ENCODE measurements at regions of chr1 and their contacts with region 1.

Region 1: GRCh38 chr1:16904560-16905111 is 8.9 kb downstream of the RNU1-2 start:
- DNase-seq: peak; percentile 97
- CTCF ChIP-seq: no peak

Region 2: GRCh38 chr1:16727190-16728111 is 177.2 kb before region 1 on chr1:
- CTCF ChIA-PET with region 1: no interaction called
- POLR2A ChIA-PET with region 1: no interaction called
- DNase-seq: peak; percentile 64
- CTCF ChIP-seq: no peak

Region 3: GRCh38 chr1:16918371-16918770 is 13.7 kb after region 1 on chr1:
- CTCF ChIA-PET with region 1: no interaction called
- POLR2A ChIA-PET with region 1: interaction called, 10 read pairs
- DNase-seq: no peak
- CTCF ChIP-seq: no peak

Region 4: DNA sequence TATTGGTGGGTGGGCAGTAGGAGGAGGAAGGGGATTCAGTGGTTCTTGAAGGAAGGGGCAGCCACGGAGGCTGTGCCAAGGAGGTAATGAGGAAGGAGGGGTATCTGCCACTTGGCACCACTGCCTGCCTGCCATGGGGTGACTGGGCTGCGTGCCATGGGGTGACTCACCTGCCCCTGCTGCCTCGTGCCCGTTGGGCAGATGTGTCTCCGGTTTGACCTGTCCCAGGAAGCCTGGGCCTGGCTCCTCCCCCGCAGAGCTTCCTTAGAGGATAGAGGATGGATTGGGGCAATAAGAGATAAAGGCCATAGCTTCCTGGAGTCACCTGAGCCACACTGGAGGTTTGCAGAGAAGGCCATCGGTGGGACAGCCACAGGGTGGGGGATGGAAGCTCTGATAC is 346.0 kb after region 1 on chr1:
- CTCF ChIA-PET with region 1: no interaction called
- POLR2A ChIA-PET with region 1: no interaction called
- DNase-seq: no peak
- CTCF ChIP-seq: no peak

Region 5: DNA sequence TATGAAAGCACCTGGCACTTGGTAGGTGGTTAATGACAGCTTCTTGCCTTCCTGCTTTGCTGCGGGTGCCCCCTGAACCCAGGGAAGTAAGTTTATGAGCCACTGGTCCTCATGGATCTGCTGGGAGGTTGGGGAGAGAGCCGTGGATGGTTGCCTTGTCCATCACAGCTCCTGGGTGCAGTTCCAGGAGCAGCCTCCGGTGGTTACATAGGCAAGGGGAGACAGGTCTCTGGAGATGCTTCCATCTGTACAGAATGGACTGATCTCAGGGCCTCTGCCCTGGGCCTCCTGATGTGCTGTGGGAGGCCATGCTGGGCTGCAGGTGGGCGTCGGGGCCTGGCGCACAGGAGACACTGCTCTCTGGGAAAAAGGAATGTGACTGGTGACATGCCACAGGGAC is 603.3 kb after region 1 on chr1:
- CTCF ChIA-PET with region 1: no interaction called
- POLR2A ChIA-PET with region 1: no interaction called
- DNase-seq: no peak
- CTCF ChIP-seq: no peak